Activated B cell treated with CpG ODN at 0.5 μM for 24 hours (primary cell): ENCODE measurements at regions of chr22 and their contacts with region 1.

Region 1: GRCh38 chr22:22369964-22370270 is 125.3 kb downstream of the VPREB1 start:
- DNase-seq: no peak
- ATAC-seq: peak; percentile 28
- H3K4me3 Mint-ChIP-seq: peak overlapping the region; percentile 65
- H3K27ac Mint-ChIP-seq: peak overlapping the region; percentile 73
- H3K4me1 Mint-ChIP-seq: peaks cover 86% of the 10 kb centered on the region
- H3K27me3 Mint-ChIP-seq: no peaks in the 10 kb centered on the region
- CTCF ChIP-seq: no peak

Region 2: GRCh38 chr22:22403771-22404170 is 33.9 kb after region 1 on chr22:
- CTCF ChIA-PET with region 1: interaction called, 5 read pairs
- POLR2A ChIA-PET with region 1: no interaction called
- intact Hi-C with region 1: loop called (anchors 5 kb)
- DNase-seq: no peak
- ATAC-seq: peak; percentile 70
- H3K4me3 Mint-ChIP-seq: no peak overlapping the region
- H3K27ac Mint-ChIP-seq: no peak overlapping the region
- H3K4me1 Mint-ChIP-seq: peaks cover 58% of the 10 kb centered on the region
- H3K27me3 Mint-ChIP-seq: no peaks in the 10 kb centered on the region
- CTCF ChIP-seq: no peak